Esophagus muscularis mucosa (tissue), 4 donors: ENCODE measurements at regions of chr10 and their contacts with region 1.

Region 1: DNA sequence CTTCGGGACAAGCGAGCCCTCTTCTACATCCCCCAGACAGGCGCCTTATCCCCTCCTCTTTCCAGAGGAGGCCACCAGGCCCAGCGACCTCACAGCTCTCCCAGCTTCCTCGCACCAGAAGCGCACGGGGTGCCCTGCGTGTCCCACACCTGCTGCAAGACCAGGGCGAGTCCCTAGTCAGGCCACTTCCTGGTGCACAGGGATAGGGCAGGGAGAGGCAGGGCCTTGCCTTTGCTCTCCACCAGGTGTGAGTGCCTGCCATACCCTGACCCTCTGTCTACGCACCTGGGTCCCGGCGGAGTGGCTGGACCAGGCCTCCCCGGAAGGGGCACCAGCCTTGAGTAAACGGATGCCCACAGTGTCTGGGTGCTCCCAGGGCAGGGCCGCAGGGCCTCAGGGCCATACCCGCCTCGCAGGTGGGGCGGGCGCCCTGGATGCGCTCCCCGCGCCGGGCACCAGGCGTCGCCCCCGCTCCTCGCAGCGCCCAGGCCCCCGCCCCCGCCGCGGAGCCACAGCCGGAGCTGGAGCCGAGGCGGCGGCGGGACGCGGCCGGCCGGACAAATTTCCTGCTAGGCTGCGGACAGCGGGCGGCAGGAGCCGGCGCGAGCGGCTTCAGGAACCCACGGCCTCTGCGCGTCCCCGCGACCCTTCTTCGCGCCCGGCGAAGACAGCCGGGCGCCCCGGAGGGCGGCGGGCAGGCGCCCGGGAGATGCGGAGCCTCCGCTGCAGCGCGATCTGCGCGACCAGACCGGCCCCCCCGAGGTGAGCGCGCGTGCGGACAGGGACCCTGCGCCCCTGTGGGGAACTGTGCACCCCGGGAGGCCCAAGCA is at the start of gene PTPRE:
- DNase-seq: peak; percentile 91
- H3K4me3 ChIP-seq: peak within 1 kb of the TSS; percentile 64 to 75 (median 70)
- H3K27ac ChIP-seq: peak within 1 kb of the TSS; percentile 76 to 86 (median 83)
- H3K4me1 ChIP-seq: peaks cover 14 to 27% (median 25%) of the 10 kb centered on the region in 4 donors
- H3K27me3 ChIP-seq: peaks cover 0 to 51% (median 0%) of the 10 kb centered on the region in 4 donors
- CTCF ChIP-seq: peak; percentile 72 to 82 (median 79)
- EP300 ChIP-seq: no peak
- POLR2A ChIP-seq: no peak
- total RNA-seq, gene PTPRE: 8.7 to 22.4 (median 13.3) TPM

Region 2: GRCh38 chr10:128011175-128011979 is 104.6 kb after region 1 on chr10:
- intact Hi-C with region 1: loop called (anchors 2 kb)
- DNase-seq: peak; percentile 95
- H3K4me3 ChIP-seq: peak overlapping the region in 1 of 4 donors; percentile 21
- H3K27ac ChIP-seq: no peak overlapping the region
- H3K4me1 ChIP-seq: peaks cover 9 to 25% (median 16%) of the 10 kb centered on the region in 4 donors
- H3K27me3 ChIP-seq: peaks cover 0 to 21% (median 0%) of the 10 kb centered on the region in 4 donors
- CTCF ChIP-seq: peak; percentile 93 to 99 (median 97)
- EP300 ChIP-seq: no peak
- POLR2A ChIP-seq: no peak

Region 3: DNA sequence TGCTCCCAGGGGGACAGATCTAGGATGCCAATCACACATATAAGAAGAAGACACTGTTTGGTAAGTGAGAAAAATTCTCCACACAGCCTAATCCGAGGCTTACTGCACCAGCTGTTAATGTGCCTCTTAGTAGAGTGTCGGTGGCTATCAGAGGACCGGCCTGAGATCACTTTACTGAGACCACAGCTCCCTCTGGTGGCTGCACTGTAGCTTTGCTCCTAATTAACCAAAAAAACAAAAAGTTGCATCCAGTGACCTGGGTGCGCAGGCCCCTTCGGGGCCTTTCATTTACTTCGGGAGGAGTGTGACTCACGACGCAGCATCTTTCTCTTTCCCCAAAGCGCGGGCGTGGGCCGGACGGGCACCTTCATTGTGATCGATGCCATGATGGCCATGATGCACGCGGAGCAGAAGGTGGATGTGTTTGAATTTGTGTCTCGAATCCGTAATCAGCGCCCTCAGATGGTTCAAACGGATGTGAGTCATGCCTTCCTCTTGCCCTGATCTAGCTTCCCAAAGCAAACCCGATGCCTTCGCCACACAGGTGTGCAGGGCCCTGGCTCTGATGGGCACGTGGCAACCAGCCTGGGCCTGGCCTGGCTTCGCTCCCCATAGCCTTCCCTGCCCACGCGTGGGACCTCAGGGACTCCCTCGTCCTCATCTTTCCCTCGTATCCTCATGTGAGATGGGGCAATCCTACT is 162.7 kb after region 1 on chr10:
- intact Hi-C with region 1: loop called (anchors 10 kb)
- DNase-seq: no peak
- H3K4me3 ChIP-seq: no peak overlapping the region
- H3K27ac ChIP-seq: no peak overlapping the region
- H3K4me1 ChIP-seq: peaks cover 5 to 15% (median 9%) of the 10 kb centered on the region in 4 donors
- H3K27me3 ChIP-seq: peaks cover 0 to 11% (median 0%) of the 10 kb centered on the region in 4 donors
- CTCF ChIP-seq: peak; percentile 78 to 84 (median 82)
- EP300 ChIP-seq: no peak
- POLR2A ChIP-seq: no peak